Left ventricle myocardium inferior (tissue), 1 donor: ENCODE measurements at regions of chr10 and their contacts with region 1.

Region 1: DNA sequence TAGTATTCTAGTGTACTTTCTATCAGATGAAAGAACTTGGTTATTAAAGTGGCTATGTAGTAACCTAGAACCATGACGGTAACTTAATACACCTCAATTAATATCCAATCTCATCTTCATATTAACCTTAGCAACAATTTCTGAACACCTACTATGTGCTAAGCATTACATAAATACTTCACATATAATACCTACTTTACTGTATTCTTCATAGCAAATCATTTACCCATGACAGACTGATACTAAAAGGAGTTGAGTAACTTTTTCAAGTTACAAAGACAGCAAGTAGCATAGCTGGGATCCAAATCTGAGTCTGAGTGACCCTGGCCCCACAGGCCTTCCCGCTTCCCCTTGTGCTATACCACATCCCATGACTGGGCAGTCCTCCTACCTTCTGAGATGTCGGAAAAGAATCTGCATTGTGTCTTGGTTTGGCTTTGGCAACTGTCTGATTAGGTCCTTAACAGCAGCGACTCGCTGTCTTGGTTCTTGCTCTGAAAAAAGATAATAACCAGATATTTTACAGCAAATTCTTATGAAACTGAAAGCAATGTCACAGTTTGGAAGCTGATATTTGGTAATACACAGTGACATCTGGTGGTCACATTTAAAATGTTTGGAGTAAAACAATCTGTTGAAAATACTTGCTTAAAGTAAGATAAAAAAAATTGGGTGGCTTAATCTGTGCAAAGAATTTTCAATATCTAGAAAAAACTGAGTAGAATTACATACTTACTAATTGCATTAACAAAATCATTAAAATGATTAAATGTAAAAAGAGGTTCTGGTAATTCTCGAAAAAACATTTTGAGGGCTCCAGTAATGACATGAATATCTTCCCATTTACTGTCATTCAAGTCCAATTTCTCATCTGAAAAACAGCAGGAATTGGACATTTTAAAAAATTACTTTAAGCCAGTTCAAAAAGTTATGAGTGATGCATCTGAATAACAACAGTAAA is 120.1 kb downstream of the ARHGAP12 start:
- DNase-seq: no peak
- H3K4me3 ChIP-seq: peak overlapping the region; percentile 61
- H3K27ac ChIP-seq: peak overlapping the region; percentile 87
- H3K4me1 ChIP-seq: peaks cover 11% of the 10 kb centered on the region
- H3K27me3 ChIP-seq: no peaks in the 10 kb centered on the region
- CTCF ChIP-seq: peak; percentile 68

Region 2: DNA sequence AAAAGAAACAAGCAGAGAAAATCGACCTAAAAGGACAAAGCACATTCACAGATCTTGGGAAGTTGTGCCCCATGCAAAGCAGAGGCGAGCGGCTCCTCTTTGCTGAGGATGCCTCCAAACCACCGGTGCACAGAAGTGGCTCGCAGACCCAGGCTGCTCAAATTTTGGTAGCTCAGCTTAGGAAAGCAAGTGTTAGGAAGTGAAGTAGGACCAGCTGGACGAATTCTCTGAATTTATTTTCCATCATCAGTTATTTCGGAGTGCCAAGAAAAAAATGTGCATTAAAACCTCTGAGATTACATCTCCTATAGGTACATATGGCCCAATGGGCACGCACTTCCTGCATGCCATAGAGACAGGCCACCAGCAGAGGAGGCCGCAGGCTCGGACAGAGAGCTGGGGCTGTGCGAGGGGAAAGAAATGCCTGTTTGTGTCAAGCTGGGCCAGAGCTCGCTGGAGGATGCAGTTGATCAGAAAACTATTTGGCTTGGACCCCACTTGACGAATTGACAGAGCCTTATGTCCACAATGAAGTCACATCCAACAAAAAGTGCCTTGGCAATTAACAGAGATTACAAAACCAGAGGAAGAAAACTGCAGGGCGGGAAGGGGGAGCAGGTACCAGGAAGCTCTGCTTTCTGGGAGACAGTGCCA is 1056.7 kb before region 1 on chr10:
- intact Hi-C with region 1: loop called (anchors 10 kb)
- DNase-seq: peak; percentile 75
- H3K4me3 ChIP-seq: peak overlapping the region; percentile 17
- H3K27ac ChIP-seq: peak overlapping the region; percentile 51
- H3K4me1 ChIP-seq: peaks cover 23% of the 10 kb centered on the region
- H3K27me3 ChIP-seq: no peaks in the 10 kb centered on the region
- CTCF ChIP-seq: peak; percentile 99

Region 3: GRCh38 chr10:31320550-31321211 is 487.9 kb before region 1 on chr10:
- intact Hi-C with region 1: loop called (anchors 5 kb)
- DNase-seq: peak; percentile 53
- H3K4me3 ChIP-seq: peak overlapping the region; percentile 96
- H3K27ac ChIP-seq: peak overlapping the region; percentile 98
- H3K4me1 ChIP-seq: peaks cover 71% of the 10 kb centered on the region
- H3K27me3 ChIP-seq: no peaks in the 10 kb centered on the region
- CTCF ChIP-seq: peak; percentile 33